ENCODE measurements at regions of chr19 and their contacts with region 1.

Region 1: GRCh38 chr19:2578901-2579677 is 103.2 kb downstream of the GADD45B start:
- DNase-seq: peak; percentile 88 to 94 (median 91)
- ATAC-seq: peak; percentile 82 to 90 (median 86)
- H3K4me3 ChIP-seq: peak overlapping the region; percentile 4 to 75 (median 54)
- H3K27ac ChIP-seq: peak overlapping the region; percentile 71 to 92 (median 84)
- H3K4me1 ChIP-seq: peaks cover 8 to 53% (median 33%) of the 10 kb centered on the region in 12 donors
- H3K27me3 ChIP-seq: no peaks in the 10 kb centered on the region
- CTCF ChIP-seq: peak; percentile 86 to 97 (median 95)
- POLR2A ChIP-seq: peak in 1 of 2 donors; percentile 40

Region 2: GRCh38 chr19:2221918-2222317 is 357.2 kb before region 1 on chr19:
- intact Hi-C with region 1: no loop called
- DNase-seq: no peak
- ATAC-seq: no peak
- H3K4me3 ChIP-seq: no peak overlapping the region
- H3K27ac ChIP-seq: no peak overlapping the region
- H3K4me1 ChIP-seq: peaks cover 0 to 11% (median 0%) of the 10 kb centered on the region in 12 donors
- H3K27me3 ChIP-seq: no peaks in the 10 kb centered on the region
- CTCF ChIP-seq: peak in 9 of 12 donors; percentile 6 to 34 (median 17)
- POLR2A ChIP-seq: no peak

Region 3: DNA sequence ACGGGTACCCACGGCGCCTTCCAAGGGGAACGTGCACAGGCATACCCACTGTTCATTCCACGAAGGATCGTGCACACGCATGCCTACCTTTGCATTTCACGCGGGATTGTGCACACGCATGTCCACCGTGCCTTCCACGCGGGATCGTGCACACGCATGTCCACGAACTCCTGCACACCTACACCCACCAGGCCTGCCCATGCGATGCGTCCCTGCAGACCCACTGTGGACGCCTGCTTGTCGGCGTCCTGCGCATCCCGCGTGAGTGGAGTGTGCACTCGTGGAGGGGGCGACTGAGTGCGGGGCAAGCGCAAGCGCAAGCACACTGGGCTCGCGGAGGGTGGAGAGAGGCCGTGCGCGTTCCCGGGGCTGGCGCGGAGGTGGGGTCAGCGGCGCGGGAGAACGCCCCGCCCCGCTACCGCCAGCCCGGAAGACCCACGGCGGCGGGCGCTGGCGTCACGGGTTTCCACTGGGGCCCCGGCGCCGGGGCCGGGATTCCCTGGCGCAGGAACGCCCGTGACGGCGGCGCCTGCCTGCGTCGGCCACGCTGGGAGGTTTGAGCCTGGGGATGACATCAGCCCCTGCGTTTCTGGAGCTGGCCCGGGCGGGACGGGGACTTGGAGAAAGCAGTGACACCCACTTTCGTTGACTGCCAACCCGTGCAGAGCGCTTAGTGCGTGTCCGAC is 84.5 kb before region 1 on chr19:
- intact Hi-C with region 1: loop called in 3 of 10 experiments (anchors 5 kb)
- DNase-seq: peak; percentile 87 to 94 (median 89)
- ATAC-seq: peak; percentile 52 to 81 (median 78)
- H3K4me3 ChIP-seq: peak overlapping the region; percentile 39 to 76 (median 66)
- H3K27ac ChIP-seq: peak overlapping the region; percentile 75 to 98 (median 92)
- H3K4me1 ChIP-seq: peaks cover 2 to 47% (median 23%) of the 10 kb centered on the region in 12 donors
- H3K27me3 ChIP-seq: peaks cover 0 to 27% (median 0%) of the 10 kb centered on the region in 9 donors
- CTCF ChIP-seq: no peak
- POLR2A ChIP-seq: peak in 1 of 2 donors; percentile 24

Region 4: GRCh38 chr19:2549701-2550191 is 29.3 kb before region 1 on chr19:
- intact Hi-C with region 1: loop called in 6 of 10 experiments (anchors 2 to 5 kb)
- DNase-seq: peak; percentile 80 to 88 (median 84)
- ATAC-seq: peak; percentile 24 to 58 (median 47)
- H3K4me3 ChIP-seq: no peak overlapping the region
- H3K27ac ChIP-seq: peak overlapping the region in 11 of 12 donors; percentile 13 to 91 (median 63)
- H3K4me1 ChIP-seq: peaks cover 15 to 69% (median 36%) of the 10 kb centered on the region in 12 donors
- H3K27me3 ChIP-seq: no peaks in the 10 kb centered on the region
- CTCF ChIP-seq: no peak
- POLR2A ChIP-seq: no peak

Region 5: DNA sequence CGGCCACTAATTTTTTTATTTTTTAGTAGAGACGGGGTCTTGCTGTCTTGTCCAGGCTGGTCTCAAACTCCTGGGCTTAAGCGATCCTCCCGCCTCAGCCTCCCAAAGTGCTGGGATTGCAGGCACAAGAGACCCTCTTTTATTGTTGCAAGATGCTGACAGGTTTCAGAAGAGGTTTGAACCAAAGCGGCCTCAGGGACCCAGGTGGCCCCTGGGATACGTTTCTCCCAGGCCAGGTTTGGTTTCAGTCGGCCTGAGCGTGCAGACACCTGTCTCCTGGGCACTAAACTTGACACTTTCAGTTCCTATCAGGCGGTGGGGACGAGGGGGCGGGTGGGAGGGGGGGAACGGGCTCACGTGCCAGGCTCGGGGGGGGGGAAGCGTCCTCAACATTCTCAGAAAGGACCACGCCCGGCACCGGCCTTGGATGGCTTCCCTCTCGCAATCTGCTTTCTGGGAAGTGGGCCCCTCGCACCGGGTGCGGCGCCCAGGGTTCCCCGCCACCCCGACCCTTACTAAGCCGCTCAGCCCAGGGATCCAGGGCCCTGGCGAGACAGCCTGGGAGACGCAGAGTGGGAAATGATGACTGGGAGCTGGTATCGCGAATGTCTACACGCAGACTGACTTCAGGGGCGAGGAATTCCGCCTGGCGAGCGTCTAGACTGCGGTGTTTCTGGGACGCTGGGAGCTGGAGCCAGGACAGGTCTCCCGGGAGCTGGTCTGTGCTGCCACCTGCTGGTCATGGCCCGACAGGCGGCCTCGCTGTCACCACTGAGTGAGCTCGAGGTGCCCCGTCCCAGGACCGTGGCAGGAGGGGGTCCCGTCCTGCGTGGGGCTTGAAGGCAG is 31.8 kb after region 1 on chr19:
- intact Hi-C with region 1: loop called in 4 of 10 experiments (anchors 1 to 5 kb)
- DNase-seq: peak; percentile 91 to 97 (median 94)
- ATAC-seq: peak; percentile 87 to 95 (median 92)
- H3K4me3 ChIP-seq: peak overlapping the region in 11 of 12 donors; percentile 28 to 59 (median 52)
- H3K27ac ChIP-seq: peak overlapping the region; percentile 73 to 90 (median 82)
- H3K4me1 ChIP-seq: peaks cover 0 to 32% (median 11%) of the 10 kb centered on the region in 12 donors
- H3K27me3 ChIP-seq: no peaks in the 10 kb centered on the region
- CTCF ChIP-seq: peak; percentile 96 to 100 (median 98)
- POLR2A ChIP-seq: peak in 1 of 2 donors; percentile 61